ENCODE measurements at regions of chr1 and their contacts with region 1.

Region 1: GRCh38 chr1:53945433-53946251 is at the start of gene IFT25:
- DNase-seq: peak; percentile 95 to 99 (median 96)
- ATAC-seq: peak; percentile 92 to 96 (median 94)
- H3K4me3 ChIP-seq: peak within 1 kb of the TSS; percentile 48 to 99 (median 90)
- H3K27ac ChIP-seq: peak within 1 kb of the TSS; percentile 63 to 98 (median 92)
- H3K4me1 ChIP-seq: peaks cover 2 to 42% (median 23%) of the 10 kb centered on the region in 12 donors
- H3K27me3 ChIP-seq: no peaks in the 10 kb centered on the region
- CTCF ChIP-seq: no peak
- POLR2A ChIP-seq: peak in 1 of 2 donors; percentile 88
- total RNA-seq, gene IFT25: 6.5 to 17.6 (median 12.3) TPM

Region 2: DNA sequence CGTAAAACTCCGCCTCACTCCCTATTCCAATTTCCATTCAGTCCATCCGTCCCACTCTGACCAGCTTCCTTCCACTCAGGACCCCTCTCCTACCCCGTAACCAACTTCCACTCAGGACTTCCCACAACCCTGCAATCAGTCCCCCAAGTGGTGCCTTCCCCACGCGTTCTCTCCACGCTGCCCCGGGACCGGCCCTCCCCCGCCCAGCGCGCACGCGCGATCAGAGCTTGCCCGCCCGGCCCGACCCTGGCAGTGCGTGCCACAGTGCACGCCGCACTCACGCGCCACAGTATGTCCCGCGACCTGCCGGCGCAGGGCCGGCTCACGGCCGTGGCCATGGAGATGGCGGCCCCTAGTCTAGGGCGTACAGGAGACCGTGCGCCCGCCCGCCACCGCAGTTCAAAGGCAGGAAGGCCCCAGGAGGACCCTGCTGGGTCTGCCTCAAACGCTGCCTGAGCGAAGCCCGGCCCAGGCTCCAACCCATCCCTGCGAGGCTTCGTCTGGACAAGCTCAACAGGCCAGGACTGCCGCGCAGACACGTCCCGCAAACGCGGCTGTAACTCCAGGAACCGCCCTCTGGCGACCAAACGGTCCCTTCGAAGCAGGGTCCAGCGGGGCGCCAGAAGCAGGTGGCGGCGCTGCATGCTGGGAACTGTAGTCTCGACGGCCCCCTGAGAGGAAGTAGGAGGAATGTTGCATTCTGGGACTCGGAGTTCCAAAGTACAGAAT is 107.6 kb before region 1 on chr1 and contains the start of gene NDC1:
- intact Hi-C with region 1: loop called in 1 of 10 experiments (anchors 5 kb)
- DNase-seq: peak; percentile 91 to 93 (median 93)
- ATAC-seq: peak; percentile 97 to 99 (median 98)
- H3K4me3 ChIP-seq: peak within 1 kb of the TSS; percentile 60 to 98 (median 84)
- H3K27ac ChIP-seq: peak within 1 kb of the TSS; percentile 90 to 99 (median 96)
- H3K4me1 ChIP-seq: peaks cover 0 to 18% (median 5%) of the 10 kb centered on the region in 12 donors
- H3K27me3 ChIP-seq: no peaks in the 10 kb centered on the region
- CTCF ChIP-seq: peak in 4 of 12 donors; percentile 9 to 49 (median 40)
- POLR2A ChIP-seq: peak in 1 of 2 donors; percentile 34
- total RNA-seq, gene NDC1: 4.3 to 8.1 (median 6.5) TPM

Region 3: GRCh38 chr1:53889304-53890298 is 56.0 kb before region 1 on chr1 and contains the start of gene YIPF1:
- intact Hi-C with region 1: loop called (anchors 2 to 5 kb)
- DNase-seq: peak; percentile 91 to 95 (median 93)
- ATAC-seq: peak; percentile 98 to 100 (median 100)
- H3K4me3 ChIP-seq: peak within 1 kb of the TSS; percentile 44 to 100 (median 81)
- H3K27ac ChIP-seq: peak within 1 kb of the TSS in 11 of 12 donors; percentile 19 to 92 (median 72)
- H3K4me1 ChIP-seq: peaks cover 0 to 45% (median 8%) of the 10 kb centered on the region in 12 donors
- H3K27me3 ChIP-seq: no peaks in the 10 kb centered on the region
- CTCF ChIP-seq: no peak
- POLR2A ChIP-seq: peak in 1 of 2 donors; percentile 67
- total RNA-seq, gene YIPF1: 11.2 to 23.5 (median 14.4) TPM

Region 4: GRCh38 chr1:54052934-54053744 is 107.5 kb after region 1 on chr1 and contains the starts of genes TCEANC2 and TMEM59:
- intact Hi-C with region 1: loop called in 4 of 10 experiments (anchors 5 to 10 kb)
- DNase-seq: peak; percentile 98 to 99 (median 98)
- ATAC-seq: peak; percentile 96 to 98 (median 98)
- H3K4me3 ChIP-seq: peak within 1 kb of the TSS; percentile 88 to 99 (median 95)
- H3K27ac ChIP-seq: peak within 1 kb of the TSS; percentile 88 to 98 (median 94)
- H3K4me1 ChIP-seq: peaks cover 0 to 51% (median 41%) of the 10 kb centered on the region in 12 donors
- H3K27me3 ChIP-seq: no peaks in the 10 kb centered on the region
- CTCF ChIP-seq: peak in 1 of 12 donors; percentile 7
- POLR2A ChIP-seq: peak in 1 of 2 donors; percentile 63
- total RNA-seq, gene TCEANC2: 3.0 to 6.6 (median 4.6) TPM
- total RNA-seq, gene TMEM59: 193 to 496 (median 352) TPM